ENCODE measurements at regions of chr7 and their contacts with region 1.

Region 1: GRCh38 chr7:151519765-151520418 is at the start of gene RHEB:
- DNase-seq: peak; percentile 93
- ATAC-seq: peak; percentile 91
- H3K4me3 ChIP-seq: peak within 1 kb of the TSS; percentile 98
- H3K27ac ChIP-seq: peak within 1 kb of the TSS; percentile 91
- H3K4me1 ChIP-seq: peaks cover 7% of the 10 kb centered on the region
- H3K27me3 ChIP-seq: no peaks in the 10 kb centered on the region
- CTCF ChIP-seq: no peak
- EP300 ChIP-seq: no peak
- POLR2A ChIP-seq: peak; percentile 10; the same call in 1 of the 2 replicates
- RAD21 ChIP-seq: no peak
- polyA plus RNA-seq, gene RHEB: 6.2 to 10.0 TPM

Region 2: DNA sequence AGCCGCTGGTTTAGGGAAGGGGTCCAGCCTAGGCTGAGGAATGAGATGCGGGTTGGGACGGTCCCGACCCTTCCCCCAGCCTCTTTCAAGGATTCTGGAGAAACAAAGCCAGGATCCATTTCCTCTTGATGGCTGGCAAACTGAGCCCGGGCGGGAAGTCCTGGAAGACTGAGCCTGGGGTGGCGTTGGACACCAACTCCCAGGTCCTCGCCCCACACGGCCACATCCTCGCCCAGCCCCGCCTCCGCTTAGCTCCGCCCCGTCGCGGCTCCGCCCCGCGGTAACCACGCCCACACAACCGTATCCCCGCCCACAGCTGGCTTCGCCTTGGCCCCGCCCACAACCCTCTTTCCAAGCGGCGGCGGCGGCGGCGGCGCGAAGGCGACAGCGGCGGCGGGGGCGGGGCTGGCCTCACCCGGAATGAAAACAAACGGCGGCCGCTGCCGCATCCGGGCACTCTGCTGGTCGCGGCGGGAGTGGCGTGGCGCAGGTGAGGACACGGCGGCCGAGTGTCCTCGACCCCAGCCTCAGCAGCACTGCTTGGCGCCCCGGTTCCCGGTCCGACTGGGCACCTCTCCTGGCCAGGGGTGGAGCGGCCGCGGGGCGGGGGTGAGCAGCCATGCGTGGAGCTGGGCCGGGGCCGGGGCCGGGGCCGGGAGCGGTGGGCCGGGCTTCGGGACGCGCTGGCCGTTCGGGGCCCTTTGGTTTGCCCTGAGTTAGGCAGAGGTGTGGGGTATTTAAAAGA is 178.4 kb before region 1 on chr7 and contains the start of gene NUB1:
- CTCF ChIA-PET with region 1: no interaction called
- POLR2A ChIA-PET with region 1: no interaction called
- RAD21 ChIA-PET with region 1: no interaction called
- SMC1A ChIA-PET with region 1: no interaction called
- in situ Hi-C with region 1: no loop called
- intact Hi-C with region 1: loop called (anchors 5 kb)
- DNase-seq: no peak
- ATAC-seq: peak; percentile 80
- H3K4me3 ChIP-seq: peak within 1 kb of the TSS; percentile 65
- H3K27ac ChIP-seq: peak within 1 kb of the TSS; percentile 81
- H3K4me1 ChIP-seq: peaks cover 25% of the 10 kb centered on the region
- H3K27me3 ChIP-seq: no peaks in the 10 kb centered on the region
- CTCF ChIP-seq: no peak
- EP300 ChIP-seq: no peak
- POLR2A ChIP-seq: peak; percentile 95
- RAD21 ChIP-seq: no peak
- polyA plus RNA-seq, gene NUB1: 24.1 to 28.8 TPM

Region 3: DNA sequence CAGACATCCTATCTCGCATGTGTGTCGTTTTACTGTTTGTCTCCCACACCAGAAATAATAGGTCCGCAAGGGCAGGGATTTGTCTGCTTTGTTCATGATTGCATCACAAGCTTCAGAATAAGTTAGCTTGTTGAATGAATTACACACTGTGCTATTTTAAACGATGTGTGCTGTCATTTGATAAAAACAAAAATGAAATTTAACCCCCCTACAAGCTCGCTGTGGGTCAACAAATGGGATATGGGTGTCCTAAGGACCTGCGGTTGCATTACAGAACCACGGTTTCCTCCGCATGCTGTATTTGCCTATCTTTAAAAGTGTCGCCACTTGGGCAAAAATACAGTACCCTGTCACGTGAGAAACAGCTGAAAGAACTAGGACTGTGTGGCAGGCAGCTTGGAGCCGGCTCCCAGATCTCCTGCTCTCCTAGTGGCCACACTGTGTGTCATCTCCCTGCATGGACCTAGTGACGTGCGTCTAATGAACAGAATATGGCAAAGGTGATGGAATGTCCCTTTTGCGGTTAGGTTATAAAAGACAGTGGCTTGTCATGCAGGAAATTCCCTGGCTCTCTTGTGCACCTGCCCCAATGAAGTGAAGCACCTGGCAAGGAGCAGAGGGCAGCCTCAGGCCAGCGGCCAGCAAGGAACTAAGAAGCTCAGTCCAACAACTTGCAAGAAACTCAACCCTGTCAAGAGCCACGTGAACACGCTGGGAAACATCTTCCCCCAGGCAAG is 47.1 kb before region 1 on chr7:
- CTCF ChIA-PET with region 1: interaction called, 4 read pairs
- POLR2A ChIA-PET with region 1: interaction called, 8 read pairs
- RAD21 ChIA-PET with region 1: interaction called, 16 read pairs
- SMC1A ChIA-PET with region 1: interaction called, 27 read pairs
- in situ Hi-C with region 1: no loop called
- intact Hi-C with region 1: loop called (anchors 1 kb)
- DNase-seq: peak; percentile 83
- ATAC-seq: peak; percentile 77
- H3K4me3 ChIP-seq: peak overlapping the region; percentile 54
- H3K27ac ChIP-seq: peak overlapping the region; percentile 96
- H3K4me1 ChIP-seq: peaks cover 45% of the 10 kb centered on the region
- H3K27me3 ChIP-seq: no peaks in the 10 kb centered on the region
- CTCF ChIP-seq: peak in 2 of 3 experiments; percentile 5 to 7; a peak in 2 of 6 replicates
- EP300 ChIP-seq: peak; percentile 76 to 90; a peak in 3 of 4 replicates
- POLR2A ChIP-seq: peak; percentile 25; the same call in 1 of the 2 replicates
- RAD21 ChIP-seq: no peak

Region 4: GRCh38 chr7:151503902-151504714 is 15.8 kb before region 1 on chr7:
- CTCF ChIA-PET with region 1: interaction called, 12 read pairs
- POLR2A ChIA-PET with region 1: interaction called, 10 read pairs
- RAD21 ChIA-PET with region 1: interaction called, 9 read pairs
- SMC1A ChIA-PET with region 1: interaction called, 10 read pairs
- in situ Hi-C with region 1: no loop called
- intact Hi-C with region 1: no loop called
- DNase-seq: no peak
- ATAC-seq: no peak
- H3K4me3 ChIP-seq: no peak overlapping the region
- H3K27ac ChIP-seq: no peak overlapping the region
- H3K4me1 ChIP-seq: peaks cover 7% of the 10 kb centered on the region
- H3K27me3 ChIP-seq: no peaks in the 10 kb centered on the region
- CTCF ChIP-seq: no peak
- EP300 ChIP-seq: no peak
- POLR2A ChIP-seq: no peak
- RAD21 ChIP-seq: no peak

Region 5: GRCh38 chr7:151539088-151539671 is 19.3 kb after region 1 on chr7:
- CTCF ChIA-PET with region 1: interaction called, 5 read pairs
- POLR2A ChIA-PET with region 1: interaction called, 9 read pairs
- RAD21 ChIA-PET with region 1: interaction called, 13 read pairs
- SMC1A ChIA-PET with region 1: interaction called, 4 read pairs
- in situ Hi-C with region 1: no loop called
- intact Hi-C with region 1: no loop called
- DNase-seq: no peak
- ATAC-seq: peak; percentile 99
- H3K4me3 ChIP-seq: no peak overlapping the region
- H3K27ac ChIP-seq: no peak overlapping the region
- H3K4me1 ChIP-seq: no peaks in the 10 kb centered on the region
- H3K27me3 ChIP-seq: no peaks in the 10 kb centered on the region
- CTCF ChIP-seq: no peak
- EP300 ChIP-seq: no peak
- POLR2A ChIP-seq: no peak
- RAD21 ChIP-seq: no peak